PC-3 (cell line): ENCODE measurements at regions of chr3 and their contacts with region 1.

Region 1: DNA sequence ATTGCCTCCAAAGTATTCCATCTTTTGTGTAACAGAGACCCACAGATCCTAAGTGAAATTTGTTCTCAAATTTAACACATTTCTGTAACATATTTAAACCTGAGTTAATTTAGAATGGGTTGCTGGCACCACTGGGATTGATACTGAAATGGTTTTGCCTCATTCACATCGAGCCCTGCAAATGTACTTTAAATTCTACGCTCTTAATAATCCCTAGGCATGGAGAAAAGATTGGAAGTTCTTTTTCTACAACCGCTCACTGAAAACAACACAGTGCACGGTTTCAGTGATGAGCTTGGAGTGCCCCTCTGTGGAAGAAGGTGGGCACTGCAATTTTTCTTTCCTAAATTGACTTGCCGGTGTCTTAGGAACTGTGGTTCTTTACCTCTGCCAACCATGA is 109.9 kb upstream of the ATP11B start:
- DNase-seq: peak; percentile 93
- ATAC-seq: peak; percentile 82
- H3K4me3 ChIP-seq: peak overlapping the region; percentile 80
- H3K27ac ChIP-seq: no peak overlapping the region
- H3K4me1 ChIP-seq: peaks cover 13% of the 10 kb centered on the region; the same call in 1 of the 2 replicates
- H3K27me3 ChIP-seq: peaks cover 35% of the 10 kb centered on the region
- CTCF ChIP-seq: peak; percentile 97

Region 2: GRCh38 chr3:181210275-181210674 is 1473.2 kb before region 1 on chr3:
- CTCF ChIA-PET with region 1: no interaction called
- POLR2A ChIA-PET with region 1: no interaction called
- intact Hi-C with region 1: loop called (anchors 1 kb)
- DNase-seq: peak; percentile 47
- ATAC-seq: no peak
- H3K4me3 ChIP-seq: no peak overlapping the region
- H3K27ac ChIP-seq: no peak overlapping the region
- H3K4me1 ChIP-seq: no peaks in the 10 kb centered on the region
- H3K27me3 ChIP-seq: peaks cover 31% of the 10 kb centered on the region; the same call in 1 of the 2 replicates
- CTCF ChIP-seq: peak; percentile 49

Region 3: GRCh38 chr3:181709537-181710279 is 973.7 kb before region 1 on chr3:
- CTCF ChIA-PET with region 1: no interaction called
- POLR2A ChIA-PET with region 1: no interaction called
- intact Hi-C with region 1: loop called (anchors 1 kb)
- DNase-seq: peak; percentile 80
- ATAC-seq: peak; percentile 61
- H3K4me3 ChIP-seq: peak overlapping the region; percentile 55
- H3K27ac ChIP-seq: no peak overlapping the region
- H3K4me1 ChIP-seq: peaks cover 9% of the 10 kb centered on the region; the same call in 1 of the 2 replicates
- H3K27me3 ChIP-seq: peaks cover 91% of the 10 kb centered on the region
- CTCF ChIP-seq: peak; percentile 87

Region 4: DNA sequence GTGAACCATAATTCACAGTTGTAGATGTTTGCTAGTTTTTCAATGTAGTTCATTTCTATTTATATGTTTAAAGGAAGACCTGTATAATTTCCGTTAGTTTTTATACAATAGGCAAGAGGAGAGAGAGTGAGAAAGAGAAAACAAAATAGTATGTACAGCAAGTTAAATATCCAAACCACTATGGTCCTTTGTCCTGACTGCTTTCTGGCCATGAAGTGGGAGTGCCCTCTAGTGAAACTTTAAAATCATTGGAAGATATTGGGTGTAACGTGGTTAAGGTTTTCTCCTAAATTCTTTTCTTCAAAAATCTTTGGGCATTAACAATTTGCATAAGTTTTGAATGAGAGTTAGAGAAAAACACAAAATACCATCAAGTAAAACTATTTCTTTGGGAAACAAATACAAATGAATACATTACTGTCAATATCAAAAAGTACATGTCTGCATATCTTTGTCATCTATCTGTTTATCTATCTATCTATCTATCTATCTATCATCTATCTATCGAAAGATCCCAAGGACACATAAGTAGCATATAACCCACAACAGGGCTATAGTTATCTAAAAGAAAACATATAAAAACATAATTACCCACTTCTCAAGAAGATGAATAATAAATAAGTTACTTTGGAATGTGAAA is 424.8 kb before region 1 on chr3:
- CTCF ChIA-PET with region 1: no interaction called
- POLR2A ChIA-PET with region 1: no interaction called
- intact Hi-C with region 1: loop called (anchors 2 kb)
- DNase-seq: peak; percentile 66
- ATAC-seq: peak; percentile 75
- H3K4me3 ChIP-seq: no peak overlapping the region
- H3K27ac ChIP-seq: no peak overlapping the region
- H3K4me1 ChIP-seq: no peaks in the 10 kb centered on the region
- H3K27me3 ChIP-seq: no peaks in the 10 kb centered on the region
- CTCF ChIP-seq: peak; percentile 87

Region 5: GRCh38 chr3:182626484-182627467 is 56.7 kb before region 1 on chr3:
- CTCF ChIA-PET with region 1: interaction called, 3 read pairs
- POLR2A ChIA-PET with region 1: no interaction called
- intact Hi-C with region 1: loop called (anchors 1 kb)
- DNase-seq: peak; percentile 59
- ATAC-seq: peak; percentile 86
- H3K4me3 ChIP-seq: no peak overlapping the region
- H3K27ac ChIP-seq: peak overlapping the region; percentile 28
- H3K4me1 ChIP-seq: peaks cover 16% of the 10 kb centered on the region
- H3K27me3 ChIP-seq: no peaks in the 10 kb centered on the region
- CTCF ChIP-seq: no peak

Region 6: GRCh38 chr3:183116025-183116614 is 432.7 kb after region 1 on chr3:
- CTCF ChIA-PET with region 1: no interaction called
- POLR2A ChIA-PET with region 1: no interaction called
- intact Hi-C with region 1: no loop called
- DNase-seq: peak; percentile 48
- ATAC-seq: peak; percentile 89
- H3K4me3 ChIP-seq: peak overlapping the region; percentile 67
- H3K27ac ChIP-seq: no peak overlapping the region
- H3K4me1 ChIP-seq: peaks cover 7% of the 10 kb centered on the region
- H3K27me3 ChIP-seq: no peaks in the 10 kb centered on the region
- CTCF ChIP-seq: no peak